Dendritic cell treated with granulocyte-macrophage colony-stimulating factor and Interleukin-4, amounts not matched to agents 40 ng/mL and 50 ng/mL, for 4 days (primary cell): ENCODE measurements at regions of chr2 and their contacts with region 1.

Region 1: DNA sequence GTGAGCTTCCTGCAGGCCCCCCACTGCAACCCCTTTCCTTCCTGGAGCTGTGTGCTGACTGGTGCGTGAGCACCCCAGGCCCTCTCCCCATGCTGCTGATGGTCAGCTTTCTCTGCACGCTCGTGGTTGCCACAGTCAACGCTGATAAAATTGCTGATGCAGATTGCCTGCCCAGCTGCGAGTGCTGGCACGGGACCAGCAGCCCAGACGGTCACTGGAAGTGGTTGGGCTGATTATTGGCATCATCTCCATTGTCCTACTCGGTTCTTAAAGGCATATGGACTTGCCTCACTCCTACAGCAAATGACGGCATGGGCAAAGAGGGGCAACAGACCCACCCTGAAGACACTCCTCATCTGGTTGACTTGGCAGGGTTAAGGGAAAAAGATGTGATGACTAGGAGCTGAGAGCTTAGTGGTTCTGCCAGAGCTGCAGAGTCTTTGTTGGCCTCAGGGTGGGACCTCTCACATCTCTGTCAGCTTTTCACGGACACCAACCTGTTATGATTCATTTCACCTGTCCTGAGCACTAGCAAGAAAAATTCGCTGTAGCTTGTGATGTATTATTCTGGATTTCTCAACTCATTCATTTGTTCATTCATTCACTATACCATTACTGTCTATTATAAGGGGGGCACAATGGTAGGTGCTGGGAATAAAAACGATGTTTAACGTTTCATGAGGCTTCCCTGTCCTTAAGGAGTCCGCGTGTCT is 38.4 kb downstream of the PAX8 start:
- H3K4me3 Mint-ChIP-seq: peak overlapping the region; percentile 35
- H3K27ac Mint-ChIP-seq: peak overlapping the region; percentile 70
- H3K4me1 Mint-ChIP-seq: peaks cover 82% of the 10 kb centered on the region
- H3K27me3 Mint-ChIP-seq: no peaks in the 10 kb centered on the region

Region 2: GRCh38 chr2:113211226-113212105 is 28.8 kb before region 1 on chr2:
- intact Hi-C with region 1: loop called (anchors 2 kb)
- H3K4me3 Mint-ChIP-seq: peak overlapping the region; percentile 51
- H3K27ac Mint-ChIP-seq: peak overlapping the region; percentile 89
- H3K4me1 Mint-ChIP-seq: peaks cover 51% of the 10 kb centered on the region
- H3K27me3 Mint-ChIP-seq: peaks cover 9% of the 10 kb centered on the region

Region 3: DNA sequence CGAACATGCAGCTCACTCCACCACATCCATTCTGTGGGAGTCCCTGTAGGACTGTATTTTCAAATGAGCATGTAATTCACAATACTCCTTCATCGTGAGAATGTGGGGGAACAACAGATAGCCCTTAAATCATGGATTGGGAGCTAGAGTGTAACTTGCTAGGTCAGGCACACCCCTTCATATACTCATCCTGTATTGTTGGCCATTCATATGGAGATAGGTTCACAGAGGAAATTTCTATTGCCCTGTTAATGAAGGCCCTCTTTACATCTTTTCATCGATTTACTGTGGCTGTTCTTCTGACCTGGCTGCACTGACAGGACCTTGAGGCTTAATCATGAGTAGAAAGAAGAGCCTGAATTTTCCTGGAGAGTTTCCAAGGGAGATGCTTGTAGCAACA is 1008.3 kb after region 1 on chr2:
- intact Hi-C with region 1: no loop called
- H3K4me3 Mint-ChIP-seq: no peak overlapping the region
- H3K27ac Mint-ChIP-seq: no peak overlapping the region
- H3K4me1 Mint-ChIP-seq: no peaks in the 10 kb centered on the region
- H3K27me3 Mint-ChIP-seq: no peaks in the 10 kb centered on the region